Right ventricle myocardium inferior (tissue), 1 donor: ENCODE measurements at regions of chr16 and their contacts with region 1.

Region 1: DNA sequence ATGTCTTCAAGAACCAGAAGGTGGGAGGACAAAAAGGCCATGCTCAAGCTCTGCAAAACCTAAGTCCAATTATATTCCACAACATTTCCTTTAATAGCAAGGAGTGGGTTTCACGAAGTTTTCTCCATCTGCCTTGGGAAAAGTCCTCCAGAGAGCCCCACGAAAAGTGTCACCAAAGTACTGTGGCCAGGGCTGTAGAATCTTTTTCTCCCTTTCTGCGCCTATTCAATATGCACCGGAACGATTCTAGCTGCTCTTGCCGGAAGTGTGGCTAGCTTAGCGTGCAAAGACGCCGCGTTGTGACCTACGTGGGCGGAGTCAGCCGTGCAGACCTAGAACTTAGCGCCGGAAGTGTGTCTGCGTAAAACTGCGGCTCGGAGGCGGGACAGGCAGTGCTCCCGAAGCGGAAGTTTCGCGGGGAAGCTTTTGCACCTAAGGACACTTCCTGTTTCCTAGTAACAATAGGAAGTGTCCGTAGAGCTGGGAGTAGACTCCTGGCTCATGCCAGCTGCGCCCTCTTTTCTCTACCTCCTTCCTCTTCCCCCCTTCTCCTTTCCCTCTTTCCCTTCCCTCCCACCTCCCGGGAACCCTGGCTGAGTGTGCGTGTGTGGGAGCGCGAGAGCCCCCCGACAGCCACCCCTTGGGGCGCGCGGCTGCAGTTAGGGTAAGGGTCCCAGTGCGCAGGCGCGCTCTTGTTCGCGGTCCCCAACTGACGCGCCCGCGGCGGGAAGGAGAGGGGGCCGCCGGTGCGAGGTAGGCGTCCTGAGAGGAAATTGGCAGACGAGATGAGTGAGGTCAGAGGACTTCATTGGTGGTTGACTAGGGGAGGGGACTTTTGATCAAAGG is at the starts of genes ZNF646 and ZNF668:
- DNase-seq: peak; percentile 99
- ATAC-seq: peak; percentile 97
- total RNA-seq, gene ZNF646: 9.9 TPM
- total RNA-seq, gene ZNF668: 5.3 TPM

Region 2: DNA sequence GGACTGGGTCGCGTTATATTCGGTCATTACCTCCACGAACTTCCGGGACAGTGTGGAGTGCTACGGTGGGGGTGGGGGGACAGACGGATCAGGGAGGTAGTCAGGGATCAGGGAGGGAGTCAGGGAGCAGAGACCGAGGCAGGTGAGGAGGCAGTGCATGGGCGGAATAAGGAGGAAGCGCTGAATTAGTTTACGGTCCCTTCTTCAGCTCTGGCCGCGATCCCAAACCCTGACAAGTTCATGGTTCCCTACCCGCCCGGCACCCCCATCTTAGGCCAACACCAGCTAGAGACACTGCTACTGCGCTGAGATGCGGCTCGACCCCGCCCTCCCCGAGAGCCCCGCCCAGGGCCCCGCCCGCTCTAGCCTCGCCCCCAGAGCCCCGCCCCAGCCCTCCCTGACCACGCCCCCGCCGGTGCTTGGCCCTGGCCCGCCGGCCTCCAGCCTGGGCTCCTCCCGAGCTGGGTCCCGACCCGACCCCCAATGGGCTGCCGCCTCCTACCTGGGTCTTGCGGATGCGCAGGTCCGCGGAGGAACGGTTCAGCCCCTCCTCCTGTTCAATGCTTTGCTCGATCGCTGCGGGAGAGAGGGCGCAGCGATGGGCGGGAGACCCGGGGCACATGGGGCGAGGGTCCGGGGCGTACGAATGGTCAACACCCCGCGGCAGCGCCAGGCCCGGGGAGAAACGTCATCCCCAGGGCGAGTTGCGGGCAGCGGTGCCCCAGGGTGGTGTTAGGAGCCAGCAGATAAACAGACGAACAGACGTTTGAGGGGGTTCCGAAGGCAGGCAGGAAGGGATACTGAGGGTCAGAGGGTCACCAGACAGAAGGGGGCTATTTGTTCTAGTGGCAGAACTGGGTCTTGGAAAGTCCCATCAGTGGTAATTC is 76.9 kb before region 1 on chr16:
- intact Hi-C with region 1: loop called (anchors 5 kb)
- DNase-seq: peak; percentile 92
- ATAC-seq: peak; percentile 97

Region 3: GRCh38 chr16:31032736-31033708 is 41.2 kb before region 1 on chr16 and contains the start of gene STX4:
- intact Hi-C with region 1: loop called (anchors 1 kb)
- DNase-seq: peak; percentile 99
- ATAC-seq: peak; percentile 95
- total RNA-seq, gene STX4: 42.3 TPM

Region 4: DNA sequence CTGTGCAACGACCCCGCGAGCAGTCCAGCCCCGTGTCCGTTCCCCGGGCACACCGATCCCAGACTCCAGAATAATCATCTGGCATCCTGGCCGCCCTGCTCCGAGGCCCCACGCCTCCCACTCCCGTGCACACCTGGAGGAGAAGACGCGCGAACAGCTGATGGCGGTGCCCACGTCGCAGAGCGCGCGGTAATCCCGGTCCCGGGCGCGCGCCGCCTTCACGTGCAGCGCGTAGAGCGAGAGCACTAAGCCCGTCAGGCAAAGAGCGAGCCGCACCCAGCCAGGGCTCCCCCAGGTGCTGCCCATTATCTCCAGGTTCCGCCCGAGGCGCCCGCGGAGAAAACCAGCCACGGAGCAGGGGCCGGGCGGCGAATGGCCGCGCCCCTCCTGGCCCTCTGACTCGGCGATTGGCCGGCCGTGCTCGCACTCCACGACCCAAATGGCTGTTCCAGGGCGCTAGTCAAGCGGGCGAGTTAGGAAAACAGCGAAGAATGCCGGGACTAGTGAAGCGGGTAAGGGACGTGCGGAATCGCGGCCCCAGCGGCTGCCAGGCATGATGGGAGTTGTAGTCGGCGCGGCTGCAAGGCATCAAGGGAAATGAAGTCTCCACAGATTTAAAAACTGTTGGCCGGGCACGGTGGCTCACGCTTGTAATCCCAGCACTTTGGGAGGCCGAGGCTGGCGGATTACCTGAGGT is 20.4 kb after region 1 on chr16 and contains the start of gene VKORC1:
- intact Hi-C with region 1: loop called (anchors 2 kb)
- DNase-seq: peak; percentile 97
- ATAC-seq: peak; percentile 96
- total RNA-seq, gene VKORC1: 41.1 TPM

Region 5: DNA sequence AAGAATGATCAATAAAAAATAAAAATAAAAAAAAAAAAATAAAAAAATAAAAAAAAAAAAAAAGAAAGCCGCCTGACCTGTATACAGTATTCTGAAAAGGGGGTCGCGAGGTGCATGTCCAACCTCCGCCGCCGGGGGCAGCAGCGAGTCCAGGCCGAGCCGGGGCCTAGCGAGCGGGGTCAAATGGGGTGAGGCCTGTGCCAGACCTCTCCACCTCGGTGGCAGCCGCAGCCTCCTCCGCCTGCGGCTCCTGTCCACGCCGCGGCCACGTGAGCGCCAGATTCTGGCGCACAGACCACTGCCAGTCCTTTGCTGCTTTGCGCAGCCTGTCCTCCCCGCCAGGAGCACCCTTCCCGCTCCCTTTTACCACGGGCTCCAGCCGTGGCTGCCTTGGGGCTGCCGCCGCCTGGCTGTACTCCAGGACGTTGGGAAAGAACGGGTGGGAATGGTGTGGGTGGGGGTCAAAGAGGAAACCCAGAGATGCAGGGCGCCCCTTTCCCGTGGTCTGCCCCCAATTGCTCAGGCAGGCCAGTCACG is 31.6 kb after region 1 on chr16:
- intact Hi-C with region 1: no loop called
- DNase-seq: peak; percentile 94
- ATAC-seq: peak; percentile 89

Region 6: GRCh38 chr16:31117391-31118197 is 43.4 kb after region 1 on chr16 and contains the start of gene KAT8:
- intact Hi-C with region 1: loop called (anchors 2 kb)
- DNase-seq: peak; percentile 99
- ATAC-seq: peak; percentile 96
- total RNA-seq, gene KAT8: 67.4 TPM

Region 7: GRCh38 chr16:31142109-31143010 is 68.2 kb after region 1 on chr16:
- intact Hi-C with region 1: loop called (anchors 1 kb)
- DNase-seq: peak; percentile 99
- ATAC-seq: peak; percentile 98

Region 8: GRCh38 chr16:31458844-31459721 is 384.9 kb after region 1 on chr16 and contains the start of gene ARMC5:
- intact Hi-C with region 1: loop called (anchors 10 kb)
- DNase-seq: peak; percentile 98
- ATAC-seq: peak; percentile 89
- total RNA-seq, gene ARMC5: 5.5 TPM